MCF 10A (cell line): ENCODE measurements at regions of chr15 and their contacts with region 1.

Region 1: GRCh38 chr15:42474827-42475226 is 16.1 kb downstream of the ZNF106 start:
- DNase-seq: no peak
- H3K4me3 Mint-ChIP-seq: no peak overlapping the region
- H3K27ac Mint-ChIP-seq: no peak overlapping the region
- H3K4me1 Mint-ChIP-seq: peaks cover 6% of the 10 kb centered on the region
- H3K27me3 Mint-ChIP-seq: no peaks in the 10 kb centered on the region
- CTCF ChIP-seq: no peak

Region 2: DNA sequence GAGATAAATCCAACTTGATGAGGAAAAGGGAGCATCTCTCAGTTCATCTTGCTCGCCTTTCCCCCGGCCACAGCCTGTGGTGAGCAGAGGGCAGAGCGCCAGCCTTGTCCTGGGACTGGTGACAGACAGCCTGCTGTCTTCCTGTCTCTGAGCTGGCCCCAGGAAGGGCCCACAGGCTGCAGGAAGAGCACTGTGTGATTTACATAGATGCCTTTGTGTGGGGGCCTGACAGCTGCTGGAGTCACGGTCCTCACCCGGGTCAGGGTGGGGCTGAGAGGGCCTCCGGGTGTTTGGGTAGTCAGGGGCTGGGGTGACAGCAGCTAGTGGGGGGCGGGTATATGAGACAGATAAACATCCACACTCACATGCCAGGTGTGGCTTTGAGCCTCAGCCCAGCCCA is 409.8 kb before region 1 on chr15:
- CTCF ChIA-PET with region 1: no interaction called
- POLR2A ChIA-PET with region 1: no interaction called
- intact Hi-C with region 1: loop called (anchors 2 kb)
- DNase-seq: no peak
- H3K4me3 Mint-ChIP-seq: no peak overlapping the region
- H3K27ac Mint-ChIP-seq: no peak overlapping the region
- H3K4me1 Mint-ChIP-seq: peaks cover 8% of the 10 kb centered on the region
- H3K27me3 Mint-ChIP-seq: no peaks in the 10 kb centered on the region
- CTCF ChIP-seq: no peak